ENCODE measurements at regions of chr9 and their contacts with region 1.

Region 1: GRCh38 chr9:104927912-104928740 is at the start of gene ABCA1:
- DNase-seq: peak in 1 of 2 experiments; percentile 83
- H3K4me3 ChIP-seq: peak within 1 kb of the TSS; percentile 71 to 94 (median 88)
- H3K27ac ChIP-seq: no peak within 1 kb of the TSS
- H3K4me1 ChIP-seq: peaks cover 0 to 5% (median 2%) of the 10 kb centered on the region in 4 experiments; a peak in 4 of 7 replicates
- H3K27me3 ChIP-seq: peaks cover 0 to 11% (median 2%) of the 10 kb centered on the region in 4 experiments; a peak in 3 of 7 replicates
- CTCF ChIP-seq: no peak
- EP300 ChIP-seq: no peak
- POLR2A ChIP-seq: peak; percentile 52 to 61; a peak in 2 of 3 replicates
- RAD21 ChIP-seq: 0 out of 4 replicates have a peak, but pooled peaks have one; percentile 1 to 9
- total RNA-seq, gene ABCA1: 7.8 and 8.5 TPM in 2 replicates

Region 2: DNA sequence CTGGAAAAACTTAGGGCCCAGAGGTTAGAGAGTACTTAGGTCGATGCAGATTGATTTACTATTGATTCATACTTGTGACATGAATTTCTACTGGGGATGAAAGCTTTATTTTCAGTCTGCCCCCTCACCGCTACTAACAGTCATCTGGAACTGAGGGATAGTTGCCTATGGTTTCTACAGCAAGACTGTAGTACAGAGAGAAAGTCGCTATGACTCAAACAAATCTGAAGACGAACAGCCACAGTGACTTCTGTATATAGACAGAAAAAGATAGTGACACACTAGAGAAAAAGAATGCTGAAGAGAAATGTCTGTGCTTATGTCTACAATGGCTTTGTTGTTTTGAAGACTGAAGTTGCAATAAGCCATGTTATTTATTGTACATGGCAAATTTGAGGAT is 216.5 kb before region 1 on chr9:
- CTCF ChIA-PET with region 1: no interaction called
- POLR2A ChIA-PET with region 1: no interaction called
- DNase-seq: no peak
- H3K4me3 ChIP-seq: no peak overlapping the region
- H3K27ac ChIP-seq: no peak overlapping the region
- H3K4me1 ChIP-seq: no peaks in the 10 kb centered on the region
- H3K27me3 ChIP-seq: no peaks in the 10 kb centered on the region
- CTCF ChIP-seq: no peak
- EP300 ChIP-seq: no peak
- POLR2A ChIP-seq: no peak
- RAD21 ChIP-seq: no peak

Region 3: GRCh38 chr9:104817437-104817836 is 110.7 kb before region 1 on chr9:
- CTCF ChIA-PET with region 1: no interaction called
- POLR2A ChIA-PET with region 1: no interaction called
- DNase-seq: no peak
- H3K4me3 ChIP-seq: no peak overlapping the region
- H3K27ac ChIP-seq: no peak overlapping the region
- H3K4me1 ChIP-seq: no peaks in the 10 kb centered on the region
- H3K27me3 ChIP-seq: no peaks in the 10 kb centered on the region
- CTCF ChIP-seq: no peak
- EP300 ChIP-seq: no peak
- POLR2A ChIP-seq: no peak
- RAD21 ChIP-seq: no peak

Region 4: DNA sequence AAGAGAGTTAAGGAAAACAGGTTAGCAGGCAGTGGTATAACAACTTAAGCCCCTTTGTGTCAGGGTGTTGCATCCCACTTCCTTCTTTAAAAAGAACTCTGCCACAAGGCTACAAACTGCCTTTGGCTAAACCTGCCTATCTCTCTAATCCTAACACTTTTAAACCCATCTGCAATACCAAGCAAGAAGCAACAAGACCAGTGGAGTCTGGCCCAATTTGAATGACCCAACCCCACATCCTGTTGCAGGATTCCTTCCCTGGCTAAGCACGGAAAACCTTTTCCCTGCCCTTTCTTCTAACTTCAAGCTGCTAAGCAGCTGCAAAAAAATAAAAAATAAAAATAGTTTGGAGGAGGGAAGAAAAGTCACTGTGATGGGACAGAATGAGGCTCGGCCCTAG is 27.3 kb before region 1 on chr9:
- CTCF ChIA-PET with region 1: no interaction called
- POLR2A ChIA-PET with region 1: no interaction called
- DNase-seq: no peak
- H3K4me3 ChIP-seq: no peak overlapping the region
- H3K27ac ChIP-seq: no peak overlapping the region
- H3K4me1 ChIP-seq: peaks cover 0 to 5% (median 4%) of the 10 kb centered on the region in 4 experiments; a peak in 4 of 7 replicates
- H3K27me3 ChIP-seq: no peaks in the 10 kb centered on the region
- CTCF ChIP-seq: no peak
- EP300 ChIP-seq: no peak
- POLR2A ChIP-seq: no peak
- RAD21 ChIP-seq: no peak

Region 5: DNA sequence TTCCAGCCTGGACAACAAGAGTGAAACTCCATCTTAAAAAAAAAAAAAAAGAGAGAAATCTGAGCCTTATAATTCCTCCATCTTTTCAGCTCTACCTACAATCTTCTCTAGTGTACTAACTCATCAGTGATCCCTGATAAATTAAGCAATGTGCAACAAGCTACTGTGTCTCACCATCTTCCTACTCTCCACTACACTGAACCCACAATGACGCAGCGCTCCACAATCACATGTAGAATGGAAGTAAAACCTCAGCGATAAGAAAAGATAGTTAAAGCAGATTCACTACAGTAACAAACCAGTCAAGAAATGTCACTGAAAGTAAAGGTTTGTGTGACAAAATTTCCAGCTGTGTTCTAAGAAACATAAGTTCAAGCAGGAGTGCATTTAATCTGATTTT is 13.7 kb before region 1 on chr9:
- CTCF ChIA-PET with region 1: interaction called, 11 read pairs
- POLR2A ChIA-PET with region 1: interaction called, 3 read pairs
- DNase-seq: no peak
- H3K4me3 ChIP-seq: no peak overlapping the region
- H3K27ac ChIP-seq: no peak overlapping the region
- H3K4me1 ChIP-seq: no peaks in the 10 kb centered on the region
- H3K27me3 ChIP-seq: no peaks in the 10 kb centered on the region; a peak in 1 of 7 replicates
- CTCF ChIP-seq: no peak
- EP300 ChIP-seq: no peak
- POLR2A ChIP-seq: no peak
- RAD21 ChIP-seq: no peak

Region 6: GRCh38 chr9:104968025-104968982 is 40.2 kb after region 1 on chr9:
- CTCF ChIA-PET with region 1: interaction called, 14 read pairs
- POLR2A ChIA-PET with region 1: interaction called, 53 read pairs
- DNase-seq: peak in 1 of 2 experiments; percentile 92
- H3K4me3 ChIP-seq: peak overlapping the region; percentile 83 to 93 (median 90)
- H3K27ac ChIP-seq: peak overlapping the region; percentile 82
- H3K4me1 ChIP-seq: peaks cover 5 to 12% (median 9%) of the 10 kb centered on the region in 4 experiments
- H3K27me3 ChIP-seq: no peaks in the 10 kb centered on the region
- CTCF ChIP-seq: no peak; a peak in 1 of 4 replicates
- EP300 ChIP-seq: peak in 1 of 2 experiments; percentile 24; a peak in 1 of 3 replicates
- POLR2A ChIP-seq: peak in 1 of 2 experiments; percentile 50; a peak in 1 of 3 replicates
- RAD21 ChIP-seq: 0 out of 4 replicates have a peak, but pooled peaks have one; percentile 0 to 8

Region 7: DNA sequence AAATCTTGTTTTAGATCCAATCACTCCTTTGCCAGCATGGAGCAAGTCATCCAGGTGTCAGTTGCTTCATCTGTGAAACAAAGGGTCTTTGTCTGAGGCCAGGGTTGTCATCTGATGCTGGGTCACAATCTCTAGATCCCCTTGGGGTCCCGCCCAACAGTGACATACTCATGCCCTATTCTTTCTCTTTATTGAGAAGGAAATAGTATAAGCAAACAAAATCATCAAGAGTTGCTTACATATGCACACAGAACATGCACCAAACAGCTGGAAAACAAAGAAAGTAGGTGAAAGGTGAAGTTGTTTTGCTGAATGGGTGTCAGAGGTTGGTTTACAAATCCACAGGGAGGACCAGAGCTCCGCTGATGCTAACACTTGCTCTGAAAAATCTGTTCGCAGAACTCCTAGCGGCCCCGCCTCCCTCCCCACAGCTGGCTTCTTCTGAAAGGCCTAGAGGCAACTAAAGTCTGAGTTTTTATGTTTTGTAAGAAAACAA is 210.2 kb after region 1 on chr9:
- CTCF ChIA-PET with region 1: interaction called, 4 read pairs
- POLR2A ChIA-PET with region 1: interaction called, 14 read pairs
- DNase-seq: peak in 1 of 2 experiments; percentile 82
- H3K4me3 ChIP-seq: peak overlapping the region in 1 of 4 experiments; percentile 10; a peak in 1 of 8 replicates
- H3K27ac ChIP-seq: peak overlapping the region; percentile 51; the same call in 1 of the 2 replicates
- H3K4me1 ChIP-seq: peaks cover 7 to 18% (median 13%) of the 10 kb centered on the region in 4 experiments; a peak in 5 of 7 replicates
- H3K27me3 ChIP-seq: peaks cover 0 to 4% (median 0%) of the 10 kb centered on the region in 4 experiments; a peak in 1 of 7 replicates
- CTCF ChIP-seq: no peak
- EP300 ChIP-seq: peak in 1 of 2 experiments; percentile 70; a peak in 1 of 3 replicates
- POLR2A ChIP-seq: no peak
- RAD21 ChIP-seq: no peak

Measured in H1 (cell line).